ENCODE measurements at regions of chr5 and their contacts with region 1.

Region 1: GRCh38 chr5:169970911-169971765 is 9.2 kb downstream of the INSYN2B start:
- DNase-seq: peak; percentile 82
- ATAC-seq: peak; percentile 84
- H3K4me3 ChIP-seq: no peak overlapping the region
- H3K27ac ChIP-seq: peak overlapping the region; percentile 78
- H3K4me1 ChIP-seq: peaks cover 11% of the 10 kb centered on the region
- H3K27me3 ChIP-seq: no peaks in the 10 kb centered on the region
- CTCF ChIP-seq: no peak
- POLR2A ChIP-seq: no peak; the same call in 1 of the 2 replicates
- RAD21 ChIP-seq: no peak

Region 2: GRCh38 chr5:169923988-169924387 is 47.1 kb before region 1 on chr5:
- CTCF ChIA-PET with region 1: no interaction called
- POLR2A ChIA-PET with region 1: no interaction called
- dilution Hi-C with region 1: no loop called
- in situ Hi-C with region 1: no loop called
- intact Hi-C with region 1: no loop called
- DNase-seq: no peak
- ATAC-seq: no peak
- H3K4me3 ChIP-seq: no peak overlapping the region
- H3K27ac ChIP-seq: no peak overlapping the region
- H3K4me1 ChIP-seq: peaks cover 9% of the 10 kb centered on the region
- H3K27me3 ChIP-seq: no peaks in the 10 kb centered on the region
- CTCF ChIP-seq: no peak
- POLR2A ChIP-seq: no peak
- RAD21 ChIP-seq: no peak

Region 3: DNA sequence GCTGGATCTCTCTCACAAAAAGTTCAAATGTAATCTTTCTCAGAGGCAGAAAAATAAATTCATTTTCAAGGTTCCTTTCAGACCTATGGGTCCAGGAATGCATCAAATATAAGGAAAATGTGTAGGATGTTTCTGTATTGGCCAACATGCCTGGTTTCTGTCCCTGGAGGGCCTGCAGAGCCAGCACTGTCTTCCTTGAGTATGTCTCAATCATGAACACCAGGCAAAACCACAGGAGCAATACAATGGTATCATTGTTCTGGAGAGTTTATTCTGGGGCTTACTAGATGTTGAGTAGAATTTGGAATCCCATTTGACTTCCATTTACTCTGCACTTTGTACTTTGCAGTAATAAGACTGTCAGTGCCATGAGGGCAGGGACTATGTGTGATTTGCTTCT is 14.4 kb before region 1 on chr5:
- CTCF ChIA-PET with region 1: interaction called, 4 read pairs
- POLR2A ChIA-PET with region 1: interaction called, 12 read pairs
- dilution Hi-C with region 1: no loop called
- in situ Hi-C with region 1: no loop called
- intact Hi-C with region 1: no loop called
- DNase-seq: peak; percentile 46
- ATAC-seq: no peak
- H3K4me3 ChIP-seq: no peak overlapping the region
- H3K27ac ChIP-seq: no peak overlapping the region
- H3K4me1 ChIP-seq: peaks cover 3% of the 10 kb centered on the region
- H3K27me3 ChIP-seq: no peaks in the 10 kb centered on the region
- CTCF ChIP-seq: no peak
- POLR2A ChIP-seq: no peak
- RAD21 ChIP-seq: no peak

Region 4: GRCh38 chr5:170120576-170120975 is 149.4 kb after region 1 on chr5:
- CTCF ChIA-PET with region 1: no interaction called
- POLR2A ChIA-PET with region 1: no interaction called
- dilution Hi-C with region 1: no loop called
- in situ Hi-C with region 1: no loop called
- intact Hi-C with region 1: no loop called
- DNase-seq: peak; percentile 85
- ATAC-seq: peak; percentile 58
- H3K4me3 ChIP-seq: no peak overlapping the region
- H3K27ac ChIP-seq: peak overlapping the region; percentile 96
- H3K4me1 ChIP-seq: peaks cover 4% of the 10 kb centered on the region
- H3K27me3 ChIP-seq: no peaks in the 10 kb centered on the region
- CTCF ChIP-seq: no peak
- POLR2A ChIP-seq: no peak
- RAD21 ChIP-seq: no peak